ENCODE measurements at regions of chr13 and their contacts with region 1.

Region 1: GRCh38 chr13:110433014-110433413 is 125.9 kb downstream of the COL4A2 start:
- DNase-seq: no peak
- H3K4me3 ChIP-seq: no peak overlapping the region
- H3K27ac ChIP-seq: peak overlapping the region; percentile 40 to 41
- H3K4me1 ChIP-seq: peaks cover 2% of the 10 kb centered on the region
- H3K27me3 ChIP-seq: no peaks in the 10 kb centered on the region
- CTCF ChIP-seq: no peak
- POLR2A ChIP-seq: no peak

Region 2: DNA sequence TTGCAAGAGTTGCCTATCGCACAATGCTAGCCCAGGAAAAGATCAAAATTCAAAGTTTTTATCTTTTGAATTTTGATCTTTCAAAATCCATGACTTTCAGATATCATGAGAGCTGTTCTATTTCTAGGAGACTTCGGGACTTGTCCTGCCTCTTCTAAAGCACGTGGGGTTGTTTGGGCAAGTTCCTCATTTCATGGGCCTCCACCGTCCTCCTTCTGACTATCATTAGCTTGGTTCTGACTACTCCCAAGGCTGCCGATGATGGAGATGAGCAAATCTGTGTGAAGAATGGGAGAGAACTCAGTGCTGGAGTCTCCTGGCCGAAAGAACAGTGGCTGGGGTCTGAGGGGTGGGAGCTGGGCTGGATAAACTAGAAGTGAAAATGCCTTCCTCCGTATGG is 212.5 kb before region 1 on chr13:
- intact Hi-C with region 1: loop called (anchors 5 kb)
- DNase-seq: no peak
- H3K4me3 ChIP-seq: no peak overlapping the region
- H3K27ac ChIP-seq: peak overlapping the region in 1 of 2 donors; percentile 76
- H3K4me1 ChIP-seq: no peaks in the 10 kb centered on the region
- H3K27me3 ChIP-seq: no peaks in the 10 kb centered on the region
- CTCF ChIP-seq: no peak
- POLR2A ChIP-seq: no peak

Measured in prostate gland (tissue), 2 donors.